Caki2 (cell line): ENCODE measurements at regions of chr19 and their contacts with region 1.

Region 1: DNA sequence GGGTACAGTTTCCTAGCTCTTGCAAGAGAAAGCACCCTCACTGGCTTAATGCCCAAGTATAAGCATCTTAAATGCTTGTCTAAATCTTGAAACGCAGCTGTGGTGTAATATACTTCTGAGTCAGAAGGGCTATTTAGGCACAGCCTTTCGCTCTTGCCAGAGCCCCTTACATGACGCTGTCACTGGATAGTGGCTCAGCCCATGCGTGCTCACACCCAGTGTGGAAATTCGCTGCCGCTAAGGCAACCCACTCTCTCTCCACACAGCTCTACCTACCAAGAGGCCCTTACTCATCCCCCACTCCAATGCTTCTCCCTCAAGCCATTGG is 24.0 kb downstream of the UQCRFS1 start:
- DNase-seq: no peak

Region 2: GRCh38 chr19:29285878-29286277 is 96.9 kb after region 1 on chr19:
- in situ Hi-C with region 1: loop called (anchors 10 kb)
- DNase-seq: no peak